Activated T-helper 1 cell treated with anti-CD3 and anti-CD28 coated beads, Interleukin-12 subunit alpha, Interleukin-12 subunit beta, Interleukin-2, Interleukin-4 antibody, amounts not matched to agents 30 ng/mL and 10 ng/mL and 1 ng/mL, durations not matched to agents 14 hours and 24 hours and 36 hours (primary cell): ENCODE measurements at regions of chr9 and their contacts with region 1.

Region 1: DNA sequence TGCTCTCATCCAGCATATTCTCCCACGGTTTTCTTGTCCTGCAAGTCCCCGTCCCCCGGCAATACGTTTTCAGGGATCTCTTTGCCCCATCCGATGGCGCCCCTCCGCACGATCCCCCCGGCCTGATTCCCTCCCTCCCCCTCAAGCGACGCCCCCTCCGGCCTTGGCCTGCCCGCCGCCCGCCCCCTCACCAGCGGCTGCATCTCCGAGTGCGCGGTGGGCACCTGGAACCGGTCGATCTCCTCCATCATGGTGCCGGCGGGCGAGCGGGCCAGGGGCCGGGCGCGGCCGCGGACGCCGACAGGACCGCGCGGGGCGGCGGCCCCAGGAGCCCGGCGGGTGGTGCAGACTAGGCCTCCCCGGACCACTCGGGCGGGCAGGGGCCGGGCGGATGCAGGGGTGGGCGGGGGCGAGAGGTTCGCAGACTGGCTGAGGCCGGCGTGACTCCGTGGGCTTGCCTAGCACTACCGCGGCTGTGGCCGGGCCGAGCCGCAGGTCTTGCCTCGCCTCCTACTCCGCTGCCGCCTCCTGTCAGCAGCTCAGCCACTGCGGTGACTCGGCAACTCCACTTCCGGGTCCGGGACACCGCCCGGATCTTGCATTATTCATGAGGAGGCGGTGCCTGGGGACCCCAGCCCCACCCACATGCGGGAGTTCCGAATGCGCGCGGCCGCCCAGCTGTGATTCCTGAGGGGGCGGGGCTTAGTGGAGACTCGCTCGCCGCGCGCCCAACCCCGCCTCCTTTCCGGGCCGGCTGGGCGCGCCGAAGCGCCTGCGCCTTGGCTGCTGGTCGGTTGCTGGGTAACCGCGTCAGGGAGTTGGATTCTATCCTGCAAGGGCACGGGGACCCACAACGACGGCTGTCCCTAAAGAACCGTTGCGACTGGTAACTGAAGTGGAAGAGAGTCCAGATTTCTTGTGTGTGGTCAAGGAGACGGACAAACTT is at the starts of genes DNAI1 and FAM219A:
- DNase-seq: peak; percentile 99
- H3K4me3 Mint-ChIP-seq: peak within 1 kb of the TSS; percentile 91
- H3K27ac Mint-ChIP-seq: peak within 1 kb of the TSS; percentile 85
- H3K4me1 Mint-ChIP-seq: peaks cover 47% of the 10 kb centered on the region
- H3K27me3 Mint-ChIP-seq: peaks cover 11% of the 10 kb centered on the region
- total RNA-seq, gene DNAI1: not detected in 2 replicates
- total RNA-seq, gene FAM219A: 14.7 and 16.5 TPM in 2 replicates

Region 2: GRCh38 chr9:33816327-33817252 is 641.7 kb before region 1 on chr9 and contains the start of gene UBE2R2:
- intact Hi-C with region 1: loop called (anchors 2 kb)
- DNase-seq: peak; percentile 90
- H3K4me3 Mint-ChIP-seq: peak within 1 kb of the TSS; percentile 93
- H3K27ac Mint-ChIP-seq: peak within 1 kb of the TSS; percentile 98
- H3K4me1 Mint-ChIP-seq: peaks cover 56% of the 10 kb centered on the region
- H3K27me3 Mint-ChIP-seq: peaks cover 5% of the 10 kb centered on the region
- total RNA-seq, gene UBE2R2: 40.0 and 41.0 TPM in 2 replicates

Region 3: DNA sequence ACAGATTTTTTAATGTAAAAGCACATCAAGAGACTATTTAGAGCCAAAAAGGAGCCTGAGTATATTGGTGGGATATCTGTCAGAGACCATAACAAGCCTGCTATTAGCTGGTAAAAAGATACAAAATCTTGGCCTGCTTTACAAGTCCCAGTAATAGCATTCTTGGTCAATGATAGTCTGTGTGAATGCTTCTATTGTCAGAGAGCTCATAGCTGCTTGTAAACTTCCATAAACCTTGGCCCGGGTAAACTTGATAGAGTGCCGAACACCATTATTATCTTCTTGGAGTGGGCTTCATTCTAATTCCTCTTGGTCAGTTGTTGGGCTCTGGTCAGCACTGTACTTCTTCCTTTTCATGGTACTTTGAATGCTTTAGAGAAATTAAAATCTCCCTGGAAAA is 215.5 kb before region 1 on chr9:
- intact Hi-C with region 1: no loop called
- DNase-seq: no peak
- H3K4me3 Mint-ChIP-seq: no peak overlapping the region
- H3K27ac Mint-ChIP-seq: no peak overlapping the region
- H3K4me1 Mint-ChIP-seq: no peaks in the 10 kb centered on the region
- H3K27me3 Mint-ChIP-seq: no peaks in the 10 kb centered on the region

Region 4: GRCh38 chr9:34328987-34329832 is 129.1 kb before region 1 on chr9 and contains the starts of genes KIF24 and NUDT2:
- intact Hi-C with region 1: loop called (anchors 2 kb)
- DNase-seq: peak; percentile 96
- H3K4me3 Mint-ChIP-seq: peak within 1 kb of the TSS; percentile 96
- H3K27ac Mint-ChIP-seq: peak within 1 kb of the TSS; percentile 99
- H3K4me1 Mint-ChIP-seq: peaks cover 29% of the 10 kb centered on the region
- H3K27me3 Mint-ChIP-seq: no peaks in the 10 kb centered on the region
- total RNA-seq, gene KIF24: 5.8 and 6.1 TPM in 2 replicates
- total RNA-seq, gene NUDT2: 31.0 TPM in 2 replicates

Region 5: DNA sequence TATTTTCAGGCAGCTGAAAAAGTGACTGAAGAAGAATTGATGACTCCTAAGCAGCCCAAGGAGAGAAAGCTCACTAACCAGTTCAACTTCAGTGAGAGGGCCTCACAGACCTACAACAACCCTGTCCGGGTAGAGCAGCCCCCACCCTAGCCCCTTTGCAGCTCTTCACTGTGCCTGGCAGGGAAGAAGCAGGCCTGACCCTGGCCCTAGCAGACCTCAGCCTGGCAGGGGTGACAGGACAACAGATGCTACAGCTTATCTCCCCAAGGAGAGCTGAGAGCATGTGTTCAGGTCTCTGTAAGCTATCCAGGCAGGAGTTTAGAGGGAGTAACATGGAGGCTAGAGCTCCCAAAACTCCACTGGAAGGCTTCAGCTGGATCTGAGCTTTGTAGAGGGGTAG is 32.1 kb after region 1 on chr9:
- intact Hi-C with region 1: no loop called
- DNase-seq: no peak
- H3K4me3 Mint-ChIP-seq: no peak overlapping the region
- H3K27ac Mint-ChIP-seq: no peak overlapping the region
- H3K4me1 Mint-ChIP-seq: peaks cover 4% of the 10 kb centered on the region
- H3K27me3 Mint-ChIP-seq: peaks cover 4% of the 10 kb centered on the region

Region 6: GRCh38 chr9:34500623-34501267 is 42.5 kb after region 1 on chr9:
- intact Hi-C with region 1: loop called (anchors 1 kb)
- DNase-seq: peak; percentile 65
- H3K4me3 Mint-ChIP-seq: no peak overlapping the region
- H3K27ac Mint-ChIP-seq: peak overlapping the region; percentile 19
- H3K4me1 Mint-ChIP-seq: peaks cover 4% of the 10 kb centered on the region
- H3K27me3 Mint-ChIP-seq: peaks cover 12% of the 10 kb centered on the region

Region 7: DNA sequence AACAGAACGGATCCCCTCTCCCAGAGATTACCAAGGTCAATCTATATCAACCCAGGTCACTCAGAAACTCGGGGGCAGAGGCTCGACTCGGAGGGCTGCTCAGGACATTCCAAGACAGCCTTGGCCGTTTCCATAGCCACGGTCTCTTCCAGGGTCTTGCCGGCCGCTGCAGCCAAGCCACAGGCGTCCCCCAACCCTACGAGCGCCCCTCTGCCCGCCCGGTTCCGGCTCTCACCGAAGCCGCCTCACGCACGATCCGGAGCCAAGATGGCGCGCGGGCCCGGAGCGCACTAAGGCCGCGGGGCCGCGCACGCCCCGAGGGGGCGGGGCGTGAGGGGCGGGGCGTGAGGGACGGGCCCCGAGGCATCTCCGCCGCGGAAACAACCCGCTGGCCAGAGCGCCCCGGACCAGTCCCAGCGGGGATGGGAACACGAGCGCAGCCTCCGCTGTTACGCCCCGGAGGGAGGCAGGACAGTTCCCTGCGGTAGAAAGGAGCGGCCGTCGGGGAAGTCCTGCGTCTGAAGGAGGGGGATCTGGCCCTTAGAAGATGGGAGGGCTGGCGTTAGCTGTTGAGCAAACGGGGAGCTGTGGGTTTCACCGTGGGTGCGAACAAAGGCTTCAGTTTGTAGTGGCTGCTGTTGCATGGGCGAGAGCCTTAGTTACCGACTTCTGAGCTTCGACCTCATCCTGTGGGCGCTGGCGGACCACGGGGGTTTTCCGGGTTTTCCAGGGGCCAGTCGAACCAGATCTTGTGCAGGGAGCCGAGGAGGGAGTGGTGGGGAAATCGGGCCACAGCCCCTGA is 153.7 kb after region 1 on chr9 and contains the start of gene RPP25L:
- intact Hi-C with region 1: loop called (anchors 1 kb)
- DNase-seq: peak; percentile 84
- H3K4me3 Mint-ChIP-seq: peak within 1 kb of the TSS; percentile 95
- H3K27ac Mint-ChIP-seq: peak within 1 kb of the TSS; percentile 96
- H3K4me1 Mint-ChIP-seq: peaks cover 24% of the 10 kb centered on the region
- H3K27me3 Mint-ChIP-seq: no peaks in the 10 kb centered on the region
- total RNA-seq, gene RPP25L: 37.5 and 40.2 TPM in 2 replicates

Region 8: DNA sequence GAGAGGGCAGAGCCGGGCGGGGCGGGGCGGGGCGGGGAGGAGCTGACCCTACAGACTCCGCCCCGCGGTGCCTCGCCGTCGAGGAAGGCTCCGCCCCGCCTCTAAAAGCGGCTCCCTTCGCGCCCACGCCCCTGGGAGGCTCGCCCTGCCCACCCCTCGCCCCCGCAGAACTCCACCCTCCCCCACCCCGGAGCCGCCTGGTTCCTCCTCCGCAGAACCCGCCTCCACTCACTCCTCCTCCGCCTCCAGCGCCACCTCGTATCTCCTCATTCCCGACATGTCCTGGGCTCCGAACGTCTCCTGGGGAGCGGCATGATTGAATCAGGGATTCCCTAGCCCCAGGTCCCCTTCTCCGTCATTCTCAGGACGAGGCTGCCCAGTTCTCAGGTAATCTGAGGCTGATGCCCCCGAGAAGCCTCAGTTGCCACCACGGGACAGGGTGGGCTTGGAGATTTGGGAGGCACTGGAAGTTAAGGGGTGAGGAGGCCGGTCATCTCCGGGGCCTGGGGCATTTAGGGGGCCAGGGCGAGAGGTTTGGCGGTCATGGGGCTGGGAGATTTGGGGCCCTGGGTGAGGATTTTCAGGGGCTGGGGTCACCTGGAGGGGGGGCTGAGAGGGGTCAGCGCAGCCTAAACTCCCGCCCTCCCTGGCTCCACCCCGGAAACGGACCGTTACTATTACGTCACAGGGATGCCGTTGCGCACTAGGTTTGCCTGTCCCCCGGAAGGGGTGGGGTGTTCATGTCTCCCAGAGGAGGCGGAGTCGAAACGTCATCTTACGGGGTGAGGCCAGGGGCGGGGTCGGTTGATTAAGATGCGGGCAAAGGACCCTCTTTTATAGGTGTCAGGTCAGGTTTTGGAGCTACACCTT is 207.3 kb after region 1 on chr9:
- intact Hi-C with region 1: loop called (anchors 1 kb)
- DNase-seq: peak; percentile 86
- H3K4me3 Mint-ChIP-seq: peak overlapping the region; percentile 88
- H3K27ac Mint-ChIP-seq: peak overlapping the region; percentile 84
- H3K4me1 Mint-ChIP-seq: peaks cover 31% of the 10 kb centered on the region
- H3K27me3 Mint-ChIP-seq: no peaks in the 10 kb centered on the region